Sciatic nerve (tissue), 2 donors: ENCODE measurements at regions of chr10 and their contacts with region 1.

Region 1: GRCh38 chr10:114403541-114404161 is 651 bp downstream of the AFAP1L2 start:
- DNase-seq: peak; percentile 78
- ATAC-seq: peak; percentile 78

Region 2: GRCh38 chr10:114346271-114347031 is 57.2 kb before region 1 on chr10:
- intact Hi-C with region 1: loop called (anchors 10 kb)
- DNase-seq: no peak
- ATAC-seq: peak; percentile 78

Region 3: GRCh38 chr10:115931309-115931708 is 1527.7 kb after region 1 on chr10:
- intact Hi-C with region 1: no loop called
- DNase-seq: no peak
- ATAC-seq: no peak